ENCODE measurements at regions of chr3 and their contacts with region 1.

Region 1: GRCh38 chr3:42652611-42653302 is 740 bp upstream of the ZBTB47 start:
- DNase-seq: peak; percentile 73 to 84 (median 80)
- ATAC-seq: peak; percentile 40 to 66
- H3K4me3 ChIP-seq: peak overlapping the region; percentile 82
- H3K27ac ChIP-seq: peak overlapping the region; percentile 72
- H3K4me1 ChIP-seq: peaks cover 18% of the 10 kb centered on the region
- H3K27me3 ChIP-seq: no peaks in the 10 kb centered on the region

Region 2: GRCh38 chr3:42600111-42600988 is 52.4 kb before region 1 on chr3 and contains the start of gene NKTR:
- intact Hi-C with region 1: loop called in 2 of 4 experiments (anchors 10 kb)
- DNase-seq: peak; percentile 96 to 99 (median 99)
- ATAC-seq: peak; percentile 96 to 97
- H3K4me3 ChIP-seq: peak within 1 kb of the TSS; percentile 76
- H3K27ac ChIP-seq: peak within 1 kb of the TSS; percentile 93
- H3K4me1 ChIP-seq: no peaks in the 10 kb centered on the region
- H3K27me3 ChIP-seq: no peaks in the 10 kb centered on the region
- total RNA-seq, gene NKTR: 27.7 to 35.8 (median 29.5) TPM

Measured in right cardiac atrium (tissue), 5 donors.